CD8-positive, alpha-beta T cell (primary cell): ENCODE measurements at regions of chr14 and their contacts with region 1.

Region 1: GRCh38 chr14:65222440-65222858 is 120.1 kb upstream of the MAX start:
- DNase-seq: peak; percentile 12 to 72 (median 53)
- ATAC-seq: peak; percentile 79
- H3K4me3 ChIP-seq: no peak overlapping the region
- H3K4me3 Mint-ChIP-seq: no peak overlapping the region
- H3K27ac ChIP-seq: no peak overlapping the region
- H3K27ac Mint-ChIP-seq: no peak overlapping the region
- H3K4me1 ChIP-seq: peaks cover 8% of the 10 kb centered on the region
- H3K4me1 Mint-ChIP-seq: peaks cover 18% of the 10 kb centered on the region
- H3K27me3 ChIP-seq: no peaks in the 10 kb centered on the region
- H3K27me3 Mint-ChIP-seq: no peaks in the 10 kb centered on the region
- CTCF ChIP-seq: peak; percentile 88

Region 2: GRCh38 chr14:65200454-65200853 is 22.0 kb before region 1 on chr14:
- CTCF ChIA-PET with region 1: no interaction called
- POLR2A ChIA-PET with region 1: no interaction called
- intact Hi-C with region 1: no loop called
- DNase-seq: no peak
- ATAC-seq: no peak
- H3K4me3 ChIP-seq: no peak overlapping the region
- H3K4me3 Mint-ChIP-seq: no peak overlapping the region
- H3K27ac ChIP-seq: no peak overlapping the region
- H3K27ac Mint-ChIP-seq: no peak overlapping the region
- H3K4me1 ChIP-seq: peaks cover 2% of the 10 kb centered on the region
- H3K4me1 Mint-ChIP-seq: peaks cover 4% of the 10 kb centered on the region
- H3K27me3 ChIP-seq: no peaks in the 10 kb centered on the region
- H3K27me3 Mint-ChIP-seq: no peaks in the 10 kb centered on the region
- CTCF ChIP-seq: no peak

Region 3: GRCh38 chr14:65346947-65347346 is 124.5 kb after region 1 on chr14:
- CTCF ChIA-PET with region 1: no interaction called
- POLR2A ChIA-PET with region 1: no interaction called
- intact Hi-C with region 1: no loop called
- DNase-seq: no peak
- ATAC-seq: no peak
- H3K4me3 ChIP-seq: no peak overlapping the region
- H3K4me3 Mint-ChIP-seq: no peak overlapping the region
- H3K27ac ChIP-seq: no peak overlapping the region
- H3K27ac Mint-ChIP-seq: no peak overlapping the region
- H3K4me1 ChIP-seq: no peaks in the 10 kb centered on the region
- H3K4me1 Mint-ChIP-seq: peaks cover 15% of the 10 kb centered on the region
- H3K27me3 ChIP-seq: no peaks in the 10 kb centered on the region
- H3K27me3 Mint-ChIP-seq: no peaks in the 10 kb centered on the region
- CTCF ChIP-seq: no peak

Region 4: DNA sequence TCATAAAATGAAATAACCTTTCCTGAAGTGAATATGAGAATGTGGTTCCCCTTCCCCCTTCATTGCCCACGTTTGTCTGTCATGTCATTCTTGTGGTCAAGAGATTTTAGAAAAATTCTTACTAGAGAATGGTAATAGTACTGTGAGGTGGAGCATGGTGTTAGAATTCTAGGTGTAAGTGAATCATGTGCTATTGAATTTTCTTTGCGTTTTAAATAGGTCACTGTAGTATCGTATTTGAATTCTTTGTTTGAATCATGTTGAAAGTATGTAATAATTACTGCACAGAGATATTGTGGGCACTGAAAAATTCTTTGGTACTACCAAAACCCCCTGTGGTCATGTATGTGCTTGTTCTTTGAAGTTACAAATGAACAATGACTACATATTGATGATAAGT is 240.0 kb after region 1 on chr14:
- CTCF ChIA-PET with region 1: no interaction called
- POLR2A ChIA-PET with region 1: no interaction called
- intact Hi-C with region 1: no loop called
- DNase-seq: no peak
- ATAC-seq: no peak
- H3K4me3 ChIP-seq: no peak overlapping the region
- H3K4me3 Mint-ChIP-seq: no peak overlapping the region
- H3K27ac ChIP-seq: no peak overlapping the region
- H3K27ac Mint-ChIP-seq: peak overlapping the region; percentile 45
- H3K4me1 ChIP-seq: peaks cover 9% of the 10 kb centered on the region
- H3K4me1 Mint-ChIP-seq: peaks cover 51% of the 10 kb centered on the region
- H3K27me3 ChIP-seq: no peaks in the 10 kb centered on the region
- H3K27me3 Mint-ChIP-seq: no peaks in the 10 kb centered on the region
- CTCF ChIP-seq: no peak

Region 5: GRCh38 chr14:65604936-65605335 is 382.5 kb after region 1 on chr14:
- CTCF ChIA-PET with region 1: no interaction called
- POLR2A ChIA-PET with region 1: no interaction called
- intact Hi-C with region 1: loop called in 1 of 2 experiments (anchors 10 kb)
- DNase-seq: peak in 1 of 9 experiments; percentile 7
- ATAC-seq: no peak
- H3K4me3 ChIP-seq: no peak overlapping the region
- H3K4me3 Mint-ChIP-seq: no peak overlapping the region
- H3K27ac ChIP-seq: no peak overlapping the region
- H3K27ac Mint-ChIP-seq: no peak overlapping the region
- H3K4me1 ChIP-seq: no peaks in the 10 kb centered on the region
- H3K4me1 Mint-ChIP-seq: peaks cover 11% of the 10 kb centered on the region
- H3K27me3 ChIP-seq: no peaks in the 10 kb centered on the region
- H3K27me3 Mint-ChIP-seq: no peaks in the 10 kb centered on the region
- CTCF ChIP-seq: no peak